ENCODE measurements at regions of chr20 and their contacts with region 1.

Region 1: DNA sequence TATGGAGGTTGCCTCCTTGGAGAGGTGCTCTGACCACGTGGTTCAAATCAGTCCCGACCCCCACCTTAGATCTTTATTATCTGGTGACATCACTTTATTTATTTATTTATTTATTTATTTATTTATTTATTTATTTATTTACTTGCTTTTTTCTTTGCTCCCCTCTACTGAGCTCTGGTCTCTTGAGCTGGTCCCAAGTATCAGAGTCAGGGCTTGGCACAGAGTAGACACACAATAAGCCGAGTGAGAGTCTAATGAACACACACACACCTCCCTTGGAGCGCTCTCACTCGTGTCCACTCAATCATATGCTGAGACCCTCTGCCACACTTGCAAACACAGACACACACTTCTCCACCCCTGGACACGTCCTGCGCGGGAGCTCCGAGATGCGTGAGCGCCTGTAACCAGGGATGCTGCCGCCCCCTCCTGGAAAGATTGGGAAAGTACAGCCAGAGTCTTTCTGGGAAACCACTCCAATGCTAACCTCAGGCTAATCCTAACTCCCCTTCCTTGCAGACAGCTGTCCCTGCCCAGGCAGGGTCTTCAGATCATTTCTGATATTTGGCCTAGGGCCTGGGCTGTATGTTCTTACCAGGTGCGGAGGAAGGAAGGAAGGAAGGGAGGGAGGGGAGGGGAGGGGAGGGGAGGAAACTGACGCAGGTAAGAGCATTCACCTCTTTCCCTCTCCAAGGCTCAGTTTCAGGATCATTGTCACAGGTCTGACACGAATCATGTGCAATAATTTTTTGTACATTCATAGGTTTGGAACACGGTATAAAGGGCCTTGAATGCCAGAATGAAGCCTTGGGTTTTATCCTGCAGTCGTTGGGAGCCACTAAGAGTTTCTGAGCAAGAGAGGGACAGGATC is 70.9 kb downstream of the STK35 start:
- DNase-seq: peak; percentile 79
- H3K4me3 Mint-ChIP-seq: no peak overlapping the region
- H3K27ac Mint-ChIP-seq: no peak overlapping the region
- H3K4me1 Mint-ChIP-seq: peaks cover 3% of the 10 kb centered on the region
- H3K27me3 Mint-ChIP-seq: peaks cover 9% of the 10 kb centered on the region

Region 2: GRCh38 chr20:2005831-2006426 is 166.6 kb before region 1 on chr20:
- CTCF ChIA-PET with region 1: interaction called, 94 read pairs
- POLR2A ChIA-PET with region 1: no interaction called
- intact Hi-C with region 1: loop called (anchors 1 kb)
- DNase-seq: peak; percentile 69
- H3K4me3 Mint-ChIP-seq: no peak overlapping the region
- H3K27ac Mint-ChIP-seq: no peak overlapping the region
- H3K4me1 Mint-ChIP-seq: no peaks in the 10 kb centered on the region
- H3K27me3 Mint-ChIP-seq: peaks cover 21% of the 10 kb centered on the region

Region 3: GRCh38 chr20:2093159-2093781 is 79.3 kb before region 1 on chr20:
- CTCF ChIA-PET with region 1: interaction called, 16 read pairs
- POLR2A ChIA-PET with region 1: no interaction called
- intact Hi-C with region 1: no loop called
- DNase-seq: peak; percentile 53
- H3K4me3 Mint-ChIP-seq: no peak overlapping the region
- H3K27ac Mint-ChIP-seq: no peak overlapping the region
- H3K4me1 Mint-ChIP-seq: no peaks in the 10 kb centered on the region
- H3K27me3 Mint-ChIP-seq: peaks cover 32% of the 10 kb centered on the region

Region 4: GRCh38 chr20:2162125-2162822 is 10.3 kb before region 1 on chr20:
- CTCF ChIA-PET with region 1: interaction called, 10 read pairs
- POLR2A ChIA-PET with region 1: no interaction called
- intact Hi-C with region 1: no loop called
- DNase-seq: no peak
- H3K4me3 Mint-ChIP-seq: no peak overlapping the region
- H3K27ac Mint-ChIP-seq: no peak overlapping the region
- H3K4me1 Mint-ChIP-seq: no peaks in the 10 kb centered on the region
- H3K27me3 Mint-ChIP-seq: no peaks in the 10 kb centered on the region

Region 5: GRCh38 chr20:2183381-2183780 is 10.8 kb after region 1 on chr20:
- CTCF ChIA-PET with region 1: interaction called, 28 read pairs
- POLR2A ChIA-PET with region 1: no interaction called
- intact Hi-C with region 1: no loop called
- DNase-seq: no peak
- H3K4me3 Mint-ChIP-seq: no peak overlapping the region
- H3K27ac Mint-ChIP-seq: no peak overlapping the region
- H3K4me1 Mint-ChIP-seq: no peaks in the 10 kb centered on the region
- H3K27me3 Mint-ChIP-seq: peaks cover 2% of the 10 kb centered on the region

Region 6: GRCh38 chr20:3312940-3313682 is 1140.6 kb after region 1 on chr20:
- CTCF ChIA-PET with region 1: no interaction called
- POLR2A ChIA-PET with region 1: no interaction called
- intact Hi-C with region 1: no loop called
- DNase-seq: no peak
- H3K4me3 Mint-ChIP-seq: no peak overlapping the region
- H3K27ac Mint-ChIP-seq: no peak overlapping the region
- H3K4me1 Mint-ChIP-seq: no peaks in the 10 kb centered on the region
- H3K27me3 Mint-ChIP-seq: no peaks in the 10 kb centered on the region

Measured in activated CD4-positive, alpha-beta memory T cell treated with anti-CD3 and anti-CD28 coated beads for 36 hours (primary cell).